ENCODE measurements at regions of chr20 and their contacts with region 1.

Region 1: DNA sequence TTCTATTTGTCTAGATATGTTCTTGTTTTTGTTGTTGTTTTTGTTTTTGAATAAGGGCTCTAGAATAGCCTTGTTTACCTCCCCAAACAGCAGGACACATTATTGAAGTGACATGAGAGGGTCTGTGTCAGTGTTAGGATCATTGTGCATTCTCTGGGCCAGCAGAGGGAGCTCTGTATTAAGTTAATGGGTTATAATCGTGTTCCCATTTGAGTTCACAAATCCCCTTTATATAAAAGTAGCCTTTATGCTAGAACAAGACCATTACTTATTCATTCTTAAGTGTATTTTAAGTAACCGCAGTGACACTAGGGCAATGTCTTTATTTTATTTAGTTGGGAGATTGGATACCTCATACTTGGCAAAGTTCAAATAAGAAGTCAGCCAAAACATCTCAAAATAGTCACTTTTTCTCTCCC is 44.8 kb downstream of the STK4 start:
- DNase-seq: peak; percentile 36
- ATAC-seq: peak; percentile 81
- H3K4me3 ChIP-seq: no peak overlapping the region
- H3K27ac ChIP-seq: no peak overlapping the region
- H3K4me1 ChIP-seq: peaks cover 13 to 19% of the 10 kb centered on the region in 2 experiments
- H3K27me3 ChIP-seq: no peaks in the 10 kb centered on the region
- CTCF ChIP-seq: peak; percentile 68 to 88 (median 74); a peak in 5 of 6 replicates
- POLR2A ChIP-seq: no peak
- RAD21 ChIP-seq: peak; percentile 80

Region 2: GRCh38 chr20:43514062-43514999 is 1496.8 kb before region 1 on chr20:
- CTCF ChIA-PET with region 1: no interaction called
- POLR2A ChIA-PET with region 1: no interaction called
- RAD21 ChIA-PET with region 1: no interaction called
- intact Hi-C with region 1: no loop called
- DNase-seq: peak; percentile 96
- ATAC-seq: peak; percentile 89
- H3K4me3 ChIP-seq: peak overlapping the region; percentile 57 to 63
- H3K27ac ChIP-seq: peak overlapping the region; percentile 69
- H3K4me1 ChIP-seq: peaks cover 3 to 8% of the 10 kb centered on the region in 2 experiments; a peak in 2 of 4 replicates
- H3K27me3 ChIP-seq: no peaks in the 10 kb centered on the region
- CTCF ChIP-seq: peak in 2 of 3 experiments; percentile 19 to 28; a peak in 2 of 6 replicates
- POLR2A ChIP-seq: no peak
- RAD21 ChIP-seq: no peak

Region 3: GRCh38 chr20:44288252-44288651 is 722.9 kb before region 1 on chr20:
- CTCF ChIA-PET with region 1: no interaction called
- POLR2A ChIA-PET with region 1: no interaction called
- RAD21 ChIA-PET with region 1: no interaction called
- intact Hi-C with region 1: no loop called
- DNase-seq: no peak
- ATAC-seq: no peak
- H3K4me3 ChIP-seq: no peak overlapping the region
- H3K27ac ChIP-seq: no peak overlapping the region
- H3K4me1 ChIP-seq: no peaks in the 10 kb centered on the region
- H3K27me3 ChIP-seq: no peaks in the 10 kb centered on the region
- CTCF ChIP-seq: 0 out of 6 replicates have a peak, but pooled peaks of 1 of the 3 experiments have one; percentile 4
- POLR2A ChIP-seq: no peak
- RAD21 ChIP-seq: no peak

Region 4: DNA sequence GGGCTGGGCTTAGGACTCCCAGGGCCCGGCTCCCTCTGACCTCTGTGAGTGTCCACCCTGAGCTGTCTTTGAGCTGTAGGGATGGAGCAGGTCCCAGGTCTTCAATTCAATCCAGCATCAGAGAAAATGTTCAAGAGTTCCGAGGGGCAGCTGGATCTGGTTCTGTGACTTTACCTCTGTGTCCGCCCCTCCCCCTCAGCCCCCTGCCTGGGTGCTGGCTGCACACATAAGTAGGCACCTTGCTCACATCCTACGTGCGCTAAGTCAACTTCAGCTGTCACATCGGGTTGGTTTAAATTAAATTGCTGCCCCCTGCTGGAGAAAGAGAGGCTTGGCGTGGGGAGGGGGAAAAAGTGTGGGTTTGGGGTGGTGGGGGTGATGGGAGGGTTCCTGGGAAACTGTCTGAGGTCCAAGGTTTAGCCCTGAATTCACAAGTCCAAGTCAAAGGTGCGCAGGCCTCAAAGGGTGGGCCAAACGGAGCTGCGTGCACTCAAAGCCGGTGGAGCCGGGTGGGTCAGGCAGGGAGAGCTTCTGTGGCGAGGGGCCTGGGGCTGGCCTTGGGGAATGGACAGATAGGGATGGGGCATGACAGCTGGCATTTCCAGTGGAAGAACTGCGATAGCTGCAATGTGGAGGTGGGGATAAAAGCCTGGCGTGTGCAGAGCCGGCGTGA is 100.8 kb after region 1 on chr20:
- CTCF ChIA-PET with region 1: interaction called, 12 read pairs
- POLR2A ChIA-PET with region 1: no interaction called
- RAD21 ChIA-PET with region 1: no interaction called
- intact Hi-C with region 1: no loop called
- DNase-seq: no peak
- ATAC-seq: peak; percentile 79
- H3K4me3 ChIP-seq: no peak overlapping the region
- H3K27ac ChIP-seq: no peak overlapping the region
- H3K4me1 ChIP-seq: 0 out of 4 replicates have a peak, but pooled peaks cover 0 to 3% of the 10 kb centered on the region in 2 experiments
- H3K27me3 ChIP-seq: no peaks in the 10 kb centered on the region; the same call in 1 of the 2 replicates
- CTCF ChIP-seq: peak; percentile 42 to 80 (median 45); a peak in 5 of 6 replicates
- POLR2A ChIP-seq: no peak
- RAD21 ChIP-seq: peak; percentile 56; the same call in 1 of the 2 replicates

Region 5: DNA sequence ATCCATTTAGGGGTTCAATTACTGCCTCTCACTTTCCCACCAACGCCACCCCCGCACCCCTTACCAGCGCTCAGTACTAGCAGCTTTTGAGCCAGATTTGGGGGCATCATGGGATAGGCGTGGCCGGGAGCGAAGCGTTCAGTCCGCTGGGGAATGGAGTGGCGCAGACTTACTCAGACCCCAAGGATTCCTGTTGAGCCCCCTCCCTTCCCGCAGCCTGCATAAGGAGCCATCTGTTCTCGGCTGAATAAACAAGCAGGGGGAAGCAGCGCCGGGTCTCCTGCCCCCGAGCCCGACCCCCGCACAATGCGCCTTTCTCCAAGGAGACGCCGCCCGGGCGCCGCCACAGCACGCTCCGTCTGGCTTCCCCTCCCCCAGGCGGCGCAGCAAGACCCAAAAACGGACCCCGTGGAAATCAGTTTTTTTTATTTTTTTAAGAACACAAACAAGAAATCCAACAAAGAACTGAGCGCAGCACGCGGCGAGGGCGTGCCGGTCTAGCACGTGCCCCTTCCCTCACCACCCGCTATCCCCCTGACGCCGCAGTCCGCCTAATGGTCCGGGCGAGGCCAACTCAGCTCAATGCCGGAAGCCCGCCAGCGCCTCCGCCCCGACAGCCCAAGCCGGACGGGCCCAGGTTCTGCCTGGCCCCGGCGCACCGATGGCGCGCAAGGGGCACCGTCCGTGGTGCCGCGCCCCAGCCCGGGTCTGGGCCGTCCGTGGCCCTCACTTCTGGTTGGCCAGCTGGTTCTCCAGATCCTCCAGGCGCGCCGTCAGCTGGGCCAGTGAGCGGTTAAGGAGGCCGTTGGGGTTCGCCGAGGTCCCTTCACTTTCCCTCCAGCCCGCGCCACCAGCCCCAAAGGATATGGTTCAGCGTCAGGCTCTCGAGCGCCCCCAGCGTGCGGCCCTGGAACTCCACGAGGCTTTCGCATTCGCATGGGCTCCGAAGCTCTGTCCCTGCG is 282.2 kb after region 1 on chr20:
- CTCF ChIA-PET with region 1: interaction called, 4 read pairs
- POLR2A ChIA-PET with region 1: no interaction called
- RAD21 ChIA-PET with region 1: interaction called in 1 of 2 experiments, 4 read pairs
- intact Hi-C with region 1: loop called (anchors 2 kb)
- DNase-seq: peak; percentile 26
- ATAC-seq: peak; percentile 91
- H3K4me3 ChIP-seq: peak overlapping the region; percentile 32 to 59
- H3K27ac ChIP-seq: peak overlapping the region; percentile 23; the same call in 1 of the 2 replicates
- H3K4me1 ChIP-seq: peaks cover 0 to 12% of the 10 kb centered on the region in 2 experiments; a peak in 2 of 4 replicates
- H3K27me3 ChIP-seq: no peaks in the 10 kb centered on the region
- CTCF ChIP-seq: peak; percentile 40 to 97 (median 94); a peak in 5 of 6 replicates
- POLR2A ChIP-seq: no peak
- RAD21 ChIP-seq: no peak